ENCODE measurements at regions of chr9 and their contacts with region 1.

Region 1: DNA sequence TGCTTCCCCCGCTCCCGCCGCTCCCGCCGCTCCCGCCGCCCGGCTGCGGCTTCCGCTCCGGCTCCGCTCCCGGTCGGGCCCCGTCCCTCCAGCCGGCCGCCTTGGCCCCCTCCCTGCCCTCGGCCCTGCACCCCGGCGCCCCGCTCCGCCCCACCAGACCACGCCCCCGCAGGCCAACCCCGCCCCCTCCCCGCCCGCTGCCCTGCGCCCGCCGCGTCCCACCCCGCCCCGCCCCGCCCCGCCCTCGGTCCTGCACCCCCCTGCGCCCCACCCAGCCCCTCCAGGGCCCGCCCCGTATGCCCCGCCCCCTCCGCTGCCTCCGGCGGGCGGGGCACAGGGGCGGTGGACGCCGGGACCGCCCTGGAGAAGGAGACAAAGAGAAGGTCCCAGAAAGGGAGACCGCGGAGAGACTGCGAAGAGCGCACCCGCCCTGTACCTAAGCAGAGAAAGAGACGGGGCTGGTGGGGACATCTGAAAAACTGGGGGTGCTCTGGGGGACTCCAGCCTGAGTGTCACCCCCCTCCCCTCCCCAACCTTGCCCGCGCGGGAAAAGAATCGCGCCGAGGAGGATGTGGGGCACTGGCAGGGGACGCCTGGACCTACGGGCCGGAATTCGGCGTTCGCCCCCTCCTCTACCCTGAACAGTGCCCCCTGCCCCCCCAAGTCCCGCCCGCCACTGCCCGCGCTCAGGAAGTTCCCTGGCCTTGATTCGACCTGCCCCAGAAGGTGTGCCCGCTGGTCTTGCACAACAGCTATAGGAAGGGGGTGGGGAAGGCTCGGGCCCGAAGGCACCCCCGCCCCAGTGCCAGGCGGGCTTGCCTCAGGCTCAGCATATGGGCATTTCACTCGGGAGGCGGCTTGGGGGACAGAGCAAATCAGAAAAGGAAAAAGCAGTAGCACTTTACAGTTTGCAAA is 42.8 kb upstream of the STXBP1 start:
- DNase-seq: peak; percentile 87
- ATAC-seq: peak; percentile 32
- H3K4me3 ChIP-seq: peak overlapping the region; percentile 78
- H3K27ac ChIP-seq: peak overlapping the region; percentile 90
- H3K4me1 ChIP-seq: peaks cover 58% of the 10 kb centered on the region
- H3K27me3 ChIP-seq: no peaks in the 10 kb centered on the region
- CTCF ChIP-seq: no peak

Region 2: DNA sequence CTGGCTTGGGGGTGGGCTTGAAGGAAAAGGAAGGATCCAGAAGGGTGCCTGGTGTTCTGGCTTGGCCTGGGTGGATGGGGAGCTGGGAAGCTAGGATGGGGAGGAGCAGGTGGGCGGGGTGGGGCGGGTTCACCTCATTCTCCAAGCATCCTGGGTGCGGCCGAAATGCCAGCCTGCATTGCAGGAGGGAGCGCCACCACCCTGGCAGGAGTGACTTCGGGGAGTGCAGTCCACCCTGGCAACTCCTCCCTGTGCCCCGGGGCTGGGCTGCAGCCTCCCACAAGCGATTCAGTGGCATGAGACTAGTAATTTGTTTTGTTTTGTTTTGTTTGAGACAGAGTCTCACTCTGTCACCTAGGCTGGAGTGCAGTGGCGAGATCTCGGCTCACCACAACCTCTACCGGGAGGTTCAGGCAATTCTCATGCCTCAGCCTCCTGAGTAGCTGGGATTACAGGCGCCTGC is 152.2 kb after region 1 on chr9:
- CTCF ChIA-PET with region 1: no interaction called
- POLR2A ChIA-PET with region 1: interaction called, 21 read pairs
- intact Hi-C with region 1: no loop called
- DNase-seq: peak; percentile 86
- ATAC-seq: peak; percentile 86
- H3K4me3 ChIP-seq: peak overlapping the region; percentile 19; the same call in 1 of the 2 replicates
- H3K27ac ChIP-seq: peak overlapping the region; percentile 77
- H3K4me1 ChIP-seq: peaks cover 26% of the 10 kb centered on the region
- H3K27me3 ChIP-seq: no peaks in the 10 kb centered on the region
- CTCF ChIP-seq: peak; percentile 16; the same call in 1 of the 2 replicates

Region 3: GRCh38 chr9:128333451-128333869 is 764.2 kb after region 1 on chr9:
- CTCF ChIA-PET with region 1: no interaction called
- POLR2A ChIA-PET with region 1: no interaction called
- intact Hi-C with region 1: no loop called
- DNase-seq: no peak
- ATAC-seq: no peak
- H3K4me3 ChIP-seq: no peak overlapping the region
- H3K27ac ChIP-seq: no peak overlapping the region
- H3K4me1 ChIP-seq: no peaks in the 10 kb centered on the region
- H3K27me3 ChIP-seq: no peaks in the 10 kb centered on the region
- CTCF ChIP-seq: no peak